Caco-2 (cell line): ENCODE measurements at regions of chr1 and their contacts with region 1.

Region 1: GRCh38 chr1:174217787-174218574 is 58.7 kb downstream of the RABGAP1L start:
- DNase-seq: peak in 1 of 2 experiments; percentile 24
- H3K4me3 ChIP-seq: no peak overlapping the region
- H3K4me3 Mint-ChIP-seq: no peak overlapping the region
- H3K27ac Mint-ChIP-seq: no peak overlapping the region
- H3K4me1 ChIP-seq: no peaks in the 10 kb centered on the region
- H3K4me1 Mint-ChIP-seq: no peaks in the 10 kb centered on the region
- H3K27me3 ChIP-seq: no peaks in the 10 kb centered on the region
- H3K27me3 Mint-ChIP-seq: no peaks in the 10 kb centered on the region
- CTCF ChIP-seq: peak; percentile 64 to 75

Region 2: GRCh38 chr1:173986951-173987350 is 231.0 kb before region 1 on chr1:
- CTCF ChIA-PET with region 1: interaction called, 3 read pairs
- POLR2A ChIA-PET with region 1: no interaction called
- intact Hi-C with region 1: loop called (anchors 10 kb)
- DNase-seq: no peak
- H3K4me3 ChIP-seq: no peak overlapping the region
- H3K4me3 Mint-ChIP-seq: no peak overlapping the region
- H3K27ac Mint-ChIP-seq: no peak overlapping the region
- H3K4me1 ChIP-seq: no peaks in the 10 kb centered on the region
- H3K4me1 Mint-ChIP-seq: no peaks in the 10 kb centered on the region
- H3K27me3 ChIP-seq: no peaks in the 10 kb centered on the region
- H3K27me3 Mint-ChIP-seq: no peaks in the 10 kb centered on the region
- CTCF ChIP-seq: no peak

Region 3: GRCh38 chr1:174097426-174097825 is 120.6 kb before region 1 on chr1:
- CTCF ChIA-PET with region 1: no interaction called
- POLR2A ChIA-PET with region 1: no interaction called
- intact Hi-C with region 1: loop called (anchors 1 kb)
- DNase-seq: no peak
- H3K4me3 ChIP-seq: no peak overlapping the region
- H3K4me3 Mint-ChIP-seq: no peak overlapping the region
- H3K27ac Mint-ChIP-seq: no peak overlapping the region
- H3K4me1 ChIP-seq: no peaks in the 10 kb centered on the region
- H3K4me1 Mint-ChIP-seq: no peaks in the 10 kb centered on the region
- H3K27me3 ChIP-seq: no peaks in the 10 kb centered on the region
- H3K27me3 Mint-ChIP-seq: no peaks in the 10 kb centered on the region
- CTCF ChIP-seq: no peak

Region 4: GRCh38 chr1:174142836-174143235 is 75.1 kb before region 1 on chr1:
- CTCF ChIA-PET with region 1: interaction called, 10 read pairs
- POLR2A ChIA-PET with region 1: no interaction called
- intact Hi-C with region 1: loop called (anchors 1 kb)
- DNase-seq: no peak
- H3K4me3 ChIP-seq: no peak overlapping the region
- H3K4me3 Mint-ChIP-seq: no peak overlapping the region
- H3K27ac Mint-ChIP-seq: no peak overlapping the region
- H3K4me1 ChIP-seq: no peaks in the 10 kb centered on the region
- H3K4me1 Mint-ChIP-seq: no peaks in the 10 kb centered on the region
- H3K27me3 ChIP-seq: no peaks in the 10 kb centered on the region
- H3K27me3 Mint-ChIP-seq: peaks cover 14% of the 10 kb centered on the region
- CTCF ChIP-seq: no peak